ENCODE measurements at regions of chr12 and their contacts with region 1.

Region 1: DNA sequence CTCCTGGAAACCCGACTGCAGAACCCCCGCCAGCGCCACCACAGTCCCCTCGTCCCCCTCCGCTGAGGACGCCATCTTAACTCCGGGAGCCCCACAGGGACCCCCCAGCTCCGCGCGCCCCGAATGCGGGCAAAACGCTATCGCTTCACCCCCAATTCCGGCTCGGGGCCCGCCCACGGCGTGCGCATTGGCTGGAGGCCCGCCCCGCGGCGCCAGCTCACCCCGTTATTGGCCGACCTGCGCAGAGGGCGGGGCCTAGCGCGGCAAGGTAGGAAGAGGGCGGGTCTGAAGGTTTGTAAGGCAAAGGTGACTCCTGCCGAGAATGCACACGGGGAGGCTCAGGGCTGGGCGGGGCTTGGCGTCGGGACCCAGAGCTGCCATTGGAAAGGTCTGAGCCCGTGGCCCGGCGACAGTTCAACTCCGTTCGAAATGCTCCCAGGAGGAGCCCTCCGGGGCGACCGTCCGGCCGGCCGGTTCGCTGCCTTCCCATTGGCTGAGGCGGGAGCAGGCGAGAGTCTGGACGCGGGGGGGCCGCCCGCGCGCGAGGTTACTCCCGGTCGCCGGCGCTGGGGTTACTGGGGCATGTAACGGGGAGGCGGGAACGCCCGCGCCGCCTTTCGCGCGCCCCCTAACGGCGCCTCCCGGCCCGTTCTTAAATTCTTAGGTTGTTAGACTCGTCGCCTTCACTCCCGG is at the start of gene LPCAT3:
- DNase-seq: peak; percentile 96 to 99 (median 98)
- H3K4me3 ChIP-seq: peak within 1 kb of the TSS; percentile 95
- H3K4me3 Mint-ChIP-seq: peak within 1 kb of the TSS; percentile 92 to 96 (median 94)
- H3K27ac ChIP-seq: peak within 1 kb of the TSS; percentile 86
- H3K27ac Mint-ChIP-seq: peak within 1 kb of the TSS; percentile 82 to 97 (median 92)
- H3K4me1 ChIP-seq: peaks cover 20% of the 10 kb centered on the region
- H3K4me1 Mint-ChIP-seq: peaks cover 24 to 39% (median 38%) of the 10 kb centered on the region in 3 donors
- H3K27me3 ChIP-seq: no peaks in the 10 kb centered on the region
- H3K27me3 Mint-ChIP-seq: no peaks in the 10 kb centered on the region
- total RNA-seq, gene LPCAT3: 20.4 to 22.1 TPM

Region 2: DNA sequence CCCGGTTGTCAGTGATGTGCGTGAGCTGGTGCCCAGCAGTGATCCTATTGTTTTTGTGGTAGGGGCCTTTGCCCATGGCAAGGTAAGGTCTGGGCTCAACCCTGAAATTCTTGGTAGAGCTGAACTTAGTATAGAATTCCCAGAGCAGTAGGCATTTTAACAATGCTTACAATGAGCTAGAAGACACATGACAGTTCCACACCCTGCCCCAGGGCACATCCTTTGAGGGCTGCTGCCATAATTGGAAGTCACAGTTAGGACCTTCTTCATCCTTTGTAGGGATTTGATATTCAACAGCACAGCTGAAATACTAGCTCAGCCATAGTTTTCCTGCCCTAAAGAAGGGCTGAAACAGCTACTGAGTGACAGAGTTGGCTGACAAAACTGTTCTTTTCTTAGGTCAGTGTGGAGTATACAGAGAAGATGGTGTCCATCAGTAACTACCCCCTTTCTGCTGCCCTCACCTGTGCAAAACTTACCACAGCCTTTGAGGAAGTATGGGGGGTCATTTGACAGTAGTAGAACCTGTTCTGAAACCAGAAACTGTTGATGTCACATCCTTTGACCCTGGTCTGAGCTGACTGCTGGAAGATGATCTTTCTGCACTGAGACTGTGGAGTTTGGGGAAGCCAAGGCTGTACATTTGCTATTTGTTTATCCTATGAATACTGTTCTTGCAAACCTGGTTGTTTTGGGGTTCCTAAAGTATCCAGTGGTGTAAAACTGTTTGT is 43.0 kb before region 1 on chr12:
- CTCF ChIA-PET with region 1: interaction called, 13 read pairs
- POLR2A ChIA-PET with region 1: interaction called, 6 read pairs
- DNase-seq: no peak
- H3K4me3 ChIP-seq: no peak overlapping the region
- H3K4me3 Mint-ChIP-seq: no peak overlapping the region
- H3K27ac ChIP-seq: no peak overlapping the region
- H3K27ac Mint-ChIP-seq: peak overlapping the region in 5 of 8 donors; percentile 6 to 79 (median 46)
- H3K4me1 ChIP-seq: peaks cover 17% of the 10 kb centered on the region
- H3K4me1 Mint-ChIP-seq: peaks cover 20 to 32% (median 22%) of the 10 kb centered on the region in 3 donors
- H3K27me3 ChIP-seq: no peaks in the 10 kb centered on the region
- H3K27me3 Mint-ChIP-seq: no peaks in the 10 kb centered on the region

Region 3: DNA sequence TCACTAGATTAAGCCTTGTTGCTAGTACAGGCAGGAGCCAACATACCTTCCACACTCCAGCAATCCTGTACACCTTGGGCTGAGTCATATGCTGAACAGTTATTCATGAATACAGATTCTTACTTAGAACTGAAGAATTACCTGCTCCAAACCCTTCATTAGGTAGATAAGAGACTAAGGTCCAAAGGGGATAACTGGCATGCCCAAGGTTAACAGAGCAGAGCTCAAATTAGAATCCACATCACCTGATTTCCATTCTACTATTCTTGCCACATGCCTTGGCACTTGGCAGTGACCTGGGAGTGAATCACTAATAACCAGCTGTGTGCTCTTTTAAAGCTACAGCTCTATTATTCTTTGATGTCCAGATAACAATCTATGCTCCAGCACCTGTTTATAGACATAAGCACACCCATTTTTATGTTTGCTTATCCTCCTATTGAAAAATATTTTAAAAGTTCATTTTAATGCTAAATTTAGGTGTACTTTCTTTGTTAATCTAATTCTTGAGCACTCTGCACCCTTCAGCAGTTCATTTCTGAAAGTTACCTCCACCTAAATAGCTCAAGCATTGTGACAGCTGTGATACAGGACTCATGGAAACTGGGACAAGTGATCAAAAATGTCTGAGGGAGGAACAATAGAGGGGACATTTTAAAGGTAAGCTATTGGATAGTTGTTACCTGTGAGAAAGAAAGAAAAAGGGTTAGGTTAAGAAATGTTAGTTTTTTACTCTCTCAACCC is 19.6 kb before region 1 on chr12:
- CTCF ChIA-PET with region 1: interaction called, 3 read pairs
- POLR2A ChIA-PET with region 1: interaction called, 11 read pairs
- DNase-seq: no peak
- H3K4me3 ChIP-seq: no peak overlapping the region
- H3K4me3 Mint-ChIP-seq: no peak overlapping the region
- H3K27ac ChIP-seq: no peak overlapping the region
- H3K27ac Mint-ChIP-seq: peak overlapping the region in 2 of 8 donors; percentile 29 to 38
- H3K4me1 ChIP-seq: no peaks in the 10 kb centered on the region
- H3K4me1 Mint-ChIP-seq: peaks cover 4 to 9% (median 8%) of the 10 kb centered on the region in 3 donors
- H3K27me3 ChIP-seq: no peaks in the 10 kb centered on the region
- H3K27me3 Mint-ChIP-seq: no peaks in the 10 kb centered on the region

Region 4: DNA sequence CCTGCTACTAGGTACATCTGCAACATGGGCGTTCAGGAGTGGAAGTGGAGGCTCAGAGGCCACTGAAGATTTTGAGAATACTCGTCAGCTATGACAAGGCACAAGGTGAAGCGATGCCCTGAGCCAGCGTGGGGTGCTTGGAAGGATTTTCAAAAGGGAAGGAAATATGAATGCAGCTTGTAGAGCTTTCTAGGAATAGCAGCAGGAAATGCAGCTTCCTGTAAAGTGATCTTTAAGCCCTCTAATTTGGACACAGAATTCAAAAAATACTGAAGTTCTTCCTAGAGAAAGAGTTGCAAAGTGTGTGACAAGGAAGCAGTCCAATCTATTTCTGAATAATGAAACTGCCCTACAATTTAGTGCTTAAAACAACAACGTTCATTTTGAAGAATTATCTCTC is 28.8 kb after region 1 on chr12:
- CTCF ChIA-PET with region 1: no interaction called
- POLR2A ChIA-PET with region 1: no interaction called
- DNase-seq: no peak
- H3K4me3 ChIP-seq: no peak overlapping the region
- H3K4me3 Mint-ChIP-seq: peak overlapping the region in 1 of 7 donors; percentile 29
- H3K27ac ChIP-seq: no peak overlapping the region
- H3K27ac Mint-ChIP-seq: peak overlapping the region in 1 of 8 donors; percentile 77
- H3K4me1 ChIP-seq: peaks cover 10% of the 10 kb centered on the region
- H3K4me1 Mint-ChIP-seq: peaks cover 3 to 9% (median 7%) of the 10 kb centered on the region in 3 donors
- H3K27me3 ChIP-seq: no peaks in the 10 kb centered on the region
- H3K27me3 Mint-ChIP-seq: peaks cover 1 to 4% of the 10 kb centered on the region in 2 donors

Region 5: DNA sequence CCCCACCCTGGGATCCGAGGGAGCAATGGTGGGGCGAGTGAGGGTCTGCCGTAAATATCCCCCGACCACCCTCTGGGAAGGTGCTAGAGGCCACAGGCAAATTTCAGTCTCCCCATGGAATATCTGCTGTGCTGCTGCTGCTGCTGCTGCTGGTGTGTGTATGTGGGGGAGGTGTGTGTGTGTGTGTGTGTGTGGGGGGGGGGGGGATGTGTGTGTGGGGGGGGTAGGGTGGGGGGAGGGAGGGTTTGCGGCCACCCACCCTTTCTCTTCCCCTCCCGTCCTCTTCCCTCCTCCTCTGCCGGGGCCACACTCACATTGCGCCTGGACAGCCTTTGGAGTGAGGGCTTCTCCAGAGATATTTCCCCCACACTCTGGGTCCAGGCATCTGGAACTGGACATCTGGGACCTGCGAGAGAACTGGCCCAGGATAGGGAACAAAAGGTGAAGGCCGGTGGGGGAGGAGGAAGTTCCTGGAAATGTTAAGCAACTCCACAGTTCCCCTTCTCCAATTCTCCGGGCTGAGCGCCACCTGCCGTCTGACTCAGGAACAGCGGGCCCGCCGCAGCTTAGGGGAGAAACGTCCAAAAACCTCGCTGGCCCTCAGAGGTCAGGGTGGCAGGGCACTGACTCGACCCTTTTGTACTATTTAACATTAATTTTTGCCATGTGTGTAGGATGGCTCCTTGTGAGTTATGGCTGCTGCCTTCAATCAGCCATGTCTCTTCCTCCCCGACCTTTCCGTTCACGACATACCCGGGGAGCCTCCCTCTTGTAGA is 90.5 kb after region 1 on chr12 and contains the start of gene C1RL:
- CTCF ChIA-PET with region 1: interaction called, 15 read pairs
- POLR2A ChIA-PET with region 1: interaction called, 5 read pairs
- DNase-seq: peak; percentile 62 to 83 (median 76)
- H3K4me3 ChIP-seq: peak within 1 kb of the TSS; percentile 96
- H3K4me3 Mint-ChIP-seq: peak within 1 kb of the TSS; percentile 93 to 99 (median 95)
- H3K27ac ChIP-seq: peak within 1 kb of the TSS; percentile 75
- H3K27ac Mint-ChIP-seq: peak within 1 kb of the TSS; percentile 86 to 97 (median 94)
- H3K4me1 ChIP-seq: peaks cover 25% of the 10 kb centered on the region
- H3K4me1 Mint-ChIP-seq: peaks cover 46 to 57% (median 52%) of the 10 kb centered on the region in 3 donors
- H3K27me3 ChIP-seq: no peaks in the 10 kb centered on the region
- H3K27me3 Mint-ChIP-seq: peaks cover 0 to 2% of the 10 kb centered on the region in 2 donors
- total RNA-seq, gene C1RL: 12.7 to 14.2 TPM

Measured in CD8-positive, alpha-beta memory T cell (primary cell).